ENCODE measurements at regions of chr5 and their contacts with region 1.

Region 1: GRCh38 chr5:62127098-62127736 is 178.8 kb upstream of the KIF2A start:
- DNase-seq: no peak
- H3K4me3 ChIP-seq: no peak overlapping the region
- H3K27ac ChIP-seq: no peak overlapping the region
- H3K4me1 ChIP-seq: peaks cover 0 to 5% (median 1%) of the 10 kb centered on the region in 4 experiments; a peak in 3 of 7 replicates
- H3K27me3 ChIP-seq: no peaks in the 10 kb centered on the region
- CTCF ChIP-seq: no peak
- EP300 ChIP-seq: no peak
- POLR2A ChIP-seq: no peak
- RAD21 ChIP-seq: no peak

Region 2: DNA sequence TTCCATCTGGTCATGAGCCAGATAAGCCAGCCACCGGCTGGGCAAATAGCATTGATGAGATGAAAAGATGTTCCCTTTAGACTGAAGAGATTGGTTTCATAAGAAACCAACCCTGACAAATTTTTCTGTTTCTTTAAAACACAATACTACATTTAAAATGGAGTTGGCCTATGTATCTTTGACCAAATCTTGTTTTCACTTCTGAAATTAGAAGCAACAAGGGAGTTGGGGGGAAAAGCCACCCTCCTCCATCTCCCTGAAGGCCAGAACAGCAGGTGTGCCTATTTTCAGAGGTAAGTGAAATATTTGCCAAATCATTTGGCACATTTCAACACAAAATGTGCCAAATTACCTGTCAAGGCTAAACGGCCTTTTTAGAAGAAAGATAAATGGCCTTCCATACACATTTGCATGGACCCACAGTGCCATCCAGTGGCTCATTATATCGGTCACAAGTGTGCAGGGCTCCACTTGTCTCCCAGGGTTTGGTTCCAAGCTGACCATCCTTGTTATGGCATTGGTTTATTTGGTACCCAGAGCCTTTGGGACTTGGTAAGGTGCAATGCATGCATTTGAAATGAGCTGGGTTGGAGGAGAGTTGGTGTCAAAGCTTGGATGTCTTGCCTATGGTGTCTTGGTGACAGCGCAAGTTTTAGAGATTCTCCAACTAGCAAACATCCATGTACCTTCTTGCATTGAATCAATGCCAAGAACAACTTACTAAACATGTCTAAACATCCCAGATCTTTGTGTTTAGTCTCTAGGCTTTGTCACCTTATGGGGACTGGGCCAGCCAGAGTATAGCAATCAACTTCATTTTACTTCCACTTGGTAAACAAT is 193.2 kb before region 1 on chr5:
- CTCF ChIA-PET with region 1: no interaction called
- POLR2A ChIA-PET with region 1: no interaction called
- DNase-seq: peak in 1 of 2 experiments; percentile 69
- H3K4me3 ChIP-seq: no peak overlapping the region
- H3K27ac ChIP-seq: no peak overlapping the region
- H3K4me1 ChIP-seq: no peaks in the 10 kb centered on the region
- H3K27me3 ChIP-seq: no peaks in the 10 kb centered on the region
- CTCF ChIP-seq: peak; percentile 58 to 79 (median 71)
- EP300 ChIP-seq: no peak
- POLR2A ChIP-seq: no peak
- RAD21 ChIP-seq: peak; percentile 94 to 96

Region 3: DNA sequence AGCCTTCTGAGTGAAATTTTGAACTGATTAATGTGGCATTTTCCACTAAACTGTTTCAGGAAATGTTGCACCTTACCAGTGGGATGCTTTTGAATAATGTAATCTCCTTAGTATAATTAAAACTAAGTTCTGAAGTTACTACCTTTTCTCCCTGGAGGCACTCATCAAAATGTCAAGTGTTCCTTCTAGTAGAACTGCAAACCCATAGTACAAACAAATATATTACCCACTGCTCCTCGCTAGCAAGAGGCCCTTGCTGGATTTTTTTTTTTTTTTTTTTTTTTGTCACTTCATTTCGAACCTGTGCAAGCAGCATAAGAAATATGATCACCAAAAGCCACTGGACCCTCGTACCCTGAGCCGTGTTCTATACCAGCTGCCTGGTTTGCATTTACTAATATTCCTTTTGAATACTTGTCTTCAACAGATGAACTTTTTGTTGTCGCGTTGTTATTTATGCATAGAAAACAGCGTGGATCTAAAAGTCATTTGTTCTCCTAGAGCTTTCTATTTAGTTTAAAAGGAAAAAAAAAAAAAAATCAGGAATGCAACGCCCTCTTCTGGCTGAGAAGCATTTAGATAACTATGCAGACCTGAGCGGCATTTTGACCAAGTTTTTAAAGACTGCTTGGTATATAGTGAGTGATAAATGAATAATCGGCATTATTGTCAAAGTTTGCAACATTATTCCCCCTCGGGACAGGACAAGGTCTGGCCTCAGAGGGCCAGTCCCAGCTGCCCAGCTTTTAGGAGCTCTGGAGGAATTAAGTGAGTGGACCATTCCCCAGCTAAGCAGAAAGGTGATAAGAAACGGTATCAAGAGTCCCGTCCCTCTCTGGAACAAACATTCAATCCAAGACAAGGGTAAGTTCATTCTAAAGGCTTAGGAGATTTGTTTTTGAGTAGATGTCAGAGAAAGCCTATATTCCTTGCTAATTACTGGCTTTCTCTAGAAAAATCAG is 16.3 kb after region 1 on chr5:
- CTCF ChIA-PET with region 1: interaction called, 10 read pairs
- POLR2A ChIA-PET with region 1: no interaction called
- DNase-seq: no peak
- H3K4me3 ChIP-seq: no peak overlapping the region; a peak in 1 of 8 replicates
- H3K27ac ChIP-seq: no peak overlapping the region
- H3K4me1 ChIP-seq: peaks cover 0 to 10% (median 6%) of the 10 kb centered on the region in 4 experiments; a peak in 4 of 7 replicates
- H3K27me3 ChIP-seq: no peaks in the 10 kb centered on the region
- CTCF ChIP-seq: peak in 2 of 3 experiments; percentile 48 to 57; a peak in 2 of 4 replicates
- EP300 ChIP-seq: no peak
- POLR2A ChIP-seq: no peak
- RAD21 ChIP-seq: peak; percentile 59 to 63